ENCODE measurements at regions of chr20 and their contacts with region 1.

Region 1: DNA sequence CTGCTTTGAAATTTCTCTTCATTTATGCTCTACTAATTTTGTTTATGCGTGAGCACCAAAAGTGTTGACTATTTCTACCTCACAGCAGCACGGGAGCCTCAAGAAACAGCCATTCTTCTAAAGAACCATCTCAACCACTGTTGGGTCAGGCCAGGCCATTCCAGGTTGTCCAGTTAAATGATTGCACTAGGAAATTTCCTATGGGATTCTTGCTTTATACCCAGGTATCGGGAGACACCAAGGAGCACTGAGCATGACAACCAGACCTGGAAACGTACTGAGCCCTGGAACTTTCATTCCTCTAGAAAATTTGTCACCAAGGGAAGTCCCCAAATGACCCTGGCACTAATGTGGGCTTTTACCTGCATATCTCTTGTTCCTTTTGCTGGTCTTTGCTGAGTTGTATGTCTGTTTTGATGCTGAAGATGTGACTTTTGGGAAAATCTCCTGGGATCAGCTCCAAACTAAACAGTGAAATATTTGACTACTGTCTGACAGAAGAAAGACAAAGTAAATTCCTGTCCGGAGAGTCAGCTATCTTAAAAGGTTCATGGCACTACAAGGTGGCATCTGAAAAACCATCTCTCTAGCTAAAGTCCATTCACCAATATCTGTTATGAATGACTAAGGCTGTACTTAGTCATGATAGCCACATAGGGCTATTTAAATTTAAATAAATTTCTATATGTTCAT is 70.5 kb downstream of the SNAP25 start:
- DNase-seq: no peak
- H3K4me3 ChIP-seq: no peak overlapping the region
- H3K27ac ChIP-seq: no peak overlapping the region
- H3K4me1 ChIP-seq: no peaks in the 10 kb centered on the region
- H3K27me3 ChIP-seq: no peaks in the 10 kb centered on the region
- CTCF ChIP-seq: no peak
- EP300 ChIP-seq: no peak
- POLR2A ChIP-seq: no peak

Region 2: DNA sequence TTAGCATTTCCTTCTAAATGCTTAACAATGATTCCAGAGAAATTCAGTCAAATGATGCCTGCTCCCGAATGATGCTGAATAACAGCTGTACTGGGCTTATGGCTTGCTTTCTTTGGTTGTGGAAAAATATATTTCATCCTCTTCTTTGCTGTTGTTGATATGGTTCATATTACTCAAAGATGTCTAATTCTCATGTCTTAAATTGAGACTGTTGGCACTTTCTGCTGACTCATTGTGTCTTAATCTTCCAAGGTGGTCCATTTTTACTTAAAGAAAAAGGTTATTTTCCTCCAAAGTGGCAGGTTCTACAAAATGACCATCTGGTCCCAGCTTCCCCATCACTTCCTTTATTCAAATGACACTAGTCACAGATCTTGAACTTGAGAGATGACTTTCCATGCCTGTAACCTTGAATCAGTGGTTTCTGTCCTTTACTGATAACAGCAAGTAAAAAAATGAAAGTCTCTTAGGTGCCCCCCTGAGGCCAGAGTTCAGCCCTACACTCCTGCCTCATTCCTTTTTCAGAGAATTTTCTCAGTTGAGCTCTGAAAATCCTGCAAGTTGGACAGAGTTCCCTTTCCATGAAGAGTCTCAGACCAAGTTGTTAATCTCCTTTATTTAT is 63.5 kb before region 1 on chr20:
- intact Hi-C with region 1: no loop called
- DNase-seq: no peak
- H3K4me3 ChIP-seq: no peak overlapping the region
- H3K27ac ChIP-seq: no peak overlapping the region
- H3K4me1 ChIP-seq: no peaks in the 10 kb centered on the region
- H3K27me3 ChIP-seq: no peaks in the 10 kb centered on the region
- CTCF ChIP-seq: no peak
- EP300 ChIP-seq: no peak
- POLR2A ChIP-seq: no peak

Region 3: GRCh38 chr20:10347086-10347880 is 58.2 kb after region 1 on chr20:
- intact Hi-C with region 1: no loop called
- DNase-seq: no peak
- H3K4me3 ChIP-seq: no peak overlapping the region
- H3K27ac ChIP-seq: no peak overlapping the region
- H3K4me1 ChIP-seq: no peaks in the 10 kb centered on the region
- H3K27me3 ChIP-seq: no peaks in the 10 kb centered on the region
- CTCF ChIP-seq: no peak
- EP300 ChIP-seq: no peak
- POLR2A ChIP-seq: no peak

Region 4: GRCh38 chr20:10696650-10697049 is 407.6 kb after region 1 on chr20:
- intact Hi-C with region 1: loop called in 1 of 4 experiments (anchors 5 kb)
- DNase-seq: no peak
- H3K4me3 ChIP-seq: no peak overlapping the region
- H3K27ac ChIP-seq: no peak overlapping the region
- H3K4me1 ChIP-seq: peaks cover 1% of the 10 kb centered on the region
- H3K27me3 ChIP-seq: no peaks in the 10 kb centered on the region
- CTCF ChIP-seq: no peak
- EP300 ChIP-seq: no peak
- POLR2A ChIP-seq: no peak

Measured in ovary (tissue), 10 donors.